ENCODE measurements at regions of chr20 and their contacts with region 1.

Region 1: DNA sequence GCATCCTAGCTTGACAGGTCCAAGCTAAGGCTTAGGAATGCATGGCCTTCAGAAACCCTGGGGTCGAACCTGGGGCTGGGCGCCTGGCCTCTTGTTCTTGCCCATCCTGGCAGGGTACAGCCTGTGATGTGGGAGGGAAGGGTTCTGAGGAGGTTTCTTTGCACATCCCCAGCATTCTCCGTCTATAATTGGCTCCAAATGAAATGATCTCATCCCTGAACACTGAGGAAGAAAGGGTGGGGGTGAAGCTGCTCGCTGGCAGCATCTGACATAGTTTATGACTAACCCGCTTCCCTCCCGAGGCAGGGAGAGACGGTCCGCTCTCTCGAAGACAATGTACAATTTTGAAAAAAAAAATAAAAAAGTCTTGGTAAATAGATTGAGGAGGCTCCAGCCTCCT is 67.1 kb upstream of the ZNFX1 start:
- DNase-seq: peak; percentile 93
- H3K4me3 ChIP-seq: peak overlapping the region in 1 of 4 donors; percentile 24
- H3K27ac ChIP-seq: peak overlapping the region; percentile 74 to 81 (median 78)
- H3K4me1 ChIP-seq: peaks cover 15 to 68% (median 51%) of the 10 kb centered on the region in 4 donors
- H3K27me3 ChIP-seq: no peaks in the 10 kb centered on the region
- CTCF ChIP-seq: no peak
- EP300 ChIP-seq: no peak
- POLR2A ChIP-seq: no peak

Region 2: GRCh38 chr20:49207076-49207475 is 137.9 kb before region 1 on chr20:
- intact Hi-C with region 1: no loop called
- DNase-seq: no peak
- H3K4me3 ChIP-seq: no peak overlapping the region
- H3K27ac ChIP-seq: no peak overlapping the region
- H3K4me1 ChIP-seq: no peaks in the 10 kb centered on the region
- H3K27me3 ChIP-seq: no peaks in the 10 kb centered on the region
- CTCF ChIP-seq: no peak
- EP300 ChIP-seq: no peak
- POLR2A ChIP-seq: no peak

Region 3: GRCh38 chr20:49372095-49372726 is 27.2 kb after region 1 on chr20:
- intact Hi-C with region 1: no loop called
- DNase-seq: no peak
- H3K4me3 ChIP-seq: no peak overlapping the region
- H3K27ac ChIP-seq: no peak overlapping the region
- H3K4me1 ChIP-seq: peaks cover 0 to 27% (median 17%) of the 10 kb centered on the region in 4 donors
- H3K27me3 ChIP-seq: no peaks in the 10 kb centered on the region
- CTCF ChIP-seq: no peak
- EP300 ChIP-seq: no peak
- POLR2A ChIP-seq: no peak

Region 4: GRCh38 chr20:49384437-49385088 is 39.6 kb after region 1 on chr20:
- intact Hi-C with region 1: loop called (anchors 5 kb)
- DNase-seq: no peak
- H3K4me3 ChIP-seq: no peak overlapping the region
- H3K27ac ChIP-seq: peak overlapping the region; percentile 69 to 94 (median 88)
- H3K4me1 ChIP-seq: peaks cover 30 to 95% (median 89%) of the 10 kb centered on the region in 4 donors
- H3K27me3 ChIP-seq: no peaks in the 10 kb centered on the region
- CTCF ChIP-seq: peak; percentile 64 to 75 (median 71)
- EP300 ChIP-seq: no peak
- POLR2A ChIP-seq: no peak

Measured in esophagus muscularis mucosa (tissue), 4 donors.